ENCODE measurements at regions of chr4 and their contacts with region 1.

Region 1: DNA sequence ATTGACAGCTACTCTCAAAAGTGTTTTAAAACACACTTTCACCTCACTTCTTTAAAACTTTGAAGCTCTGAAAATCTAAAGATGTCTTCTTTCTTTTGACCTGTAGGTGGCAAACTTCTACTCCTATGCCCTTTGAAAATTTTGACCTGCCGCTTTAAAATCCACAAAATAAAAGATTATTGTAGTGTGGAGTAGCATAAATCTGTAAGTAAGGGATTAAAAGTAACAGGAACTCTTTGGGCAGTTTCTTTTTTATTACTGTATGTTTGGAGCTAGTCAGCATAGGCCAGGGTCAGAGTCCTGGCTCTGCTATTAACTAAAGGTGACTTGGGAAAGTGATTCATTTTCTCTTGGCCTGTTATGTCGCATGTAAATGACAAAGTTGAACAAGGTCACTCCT is 25.5 kb downstream of the BBS12 start:
- DNase-seq: no peak
- H3K4me3 ChIP-seq: no peak overlapping the region
- H3K27ac ChIP-seq: no peak overlapping the region
- H3K4me1 ChIP-seq: no peaks in the 10 kb centered on the region
- H3K27me3 ChIP-seq: no peaks in the 10 kb centered on the region
- CTCF ChIP-seq: peak; percentile 44 to 67

Region 2: GRCh38 chr4:122732329-122733026 is 25.6 kb before region 1 on chr4 and contains the start of gene BBS12:
- CTCF ChIA-PET with region 1: interaction called, 3 read pairs
- dilution Hi-C with region 1: no loop called
- in situ Hi-C with region 1: no loop called
- intact Hi-C with region 1: loop called (anchors 2 kb)
- DNase-seq: peak; percentile 99
- H3K4me3 ChIP-seq: peak within 1 kb of the TSS; percentile 58 to 76 (median 70)
- H3K27ac ChIP-seq: peak within 1 kb of the TSS; percentile 92
- H3K4me1 ChIP-seq: peaks cover 7% of the 10 kb centered on the region
- H3K27me3 ChIP-seq: no peaks in the 10 kb centered on the region
- CTCF ChIP-seq: peak in 1 of 2 donors; percentile 62
- total RNA-seq, gene BBS12: 4.3 to 13.0 TPM

Region 3: DNA sequence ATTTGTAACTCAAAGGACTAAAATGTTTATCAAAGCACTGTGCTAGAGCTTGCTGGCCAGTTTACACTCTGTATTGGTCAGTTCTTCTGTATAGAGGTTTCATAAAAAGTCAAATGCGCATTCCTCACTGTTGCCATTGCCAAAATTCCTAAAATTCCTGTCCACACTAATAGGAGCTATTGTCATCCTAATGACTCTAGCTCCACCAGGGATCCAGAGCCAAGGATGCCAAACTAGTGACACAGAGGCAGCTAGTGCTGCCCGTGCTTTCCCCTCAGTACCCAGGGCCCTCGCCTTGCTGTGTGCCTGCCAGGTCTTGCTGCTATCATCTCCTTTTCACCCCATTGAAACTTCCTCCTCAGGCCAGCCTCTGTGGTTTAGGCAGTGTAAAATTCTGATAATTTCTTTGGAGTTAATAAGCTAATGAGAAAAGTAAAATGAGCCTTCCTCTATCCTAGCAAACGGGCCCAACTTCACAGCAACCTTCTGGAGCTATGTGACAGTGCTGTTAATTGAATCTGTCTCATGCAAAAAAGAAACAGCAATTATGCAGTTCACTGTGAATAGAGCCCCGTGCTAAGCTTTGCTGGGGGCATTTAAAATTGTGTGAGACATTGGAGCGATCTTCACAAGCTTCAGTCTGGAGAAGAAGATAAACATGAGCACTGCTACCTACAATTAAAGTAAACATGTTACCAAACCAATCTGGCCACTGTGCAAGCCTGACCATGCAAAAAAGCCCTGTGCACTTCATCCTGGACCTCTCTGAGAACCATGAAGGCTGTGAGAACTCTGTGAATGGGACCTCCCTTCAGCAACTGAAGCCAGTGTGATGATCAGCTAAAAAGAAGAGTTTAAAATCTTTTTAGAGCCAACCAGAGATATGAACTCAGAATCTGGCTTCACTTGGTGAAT is 25.5 kb after region 1 on chr4:
- CTCF ChIA-PET with region 1: no interaction called
- dilution Hi-C with region 1: no loop called
- in situ Hi-C with region 1: no loop called
- intact Hi-C with region 1: loop called (anchors 1 kb)
- DNase-seq: peak; percentile 87
- H3K4me3 ChIP-seq: no peak overlapping the region
- H3K27ac ChIP-seq: peak overlapping the region; percentile 49
- H3K4me1 ChIP-seq: peaks cover 34% of the 10 kb centered on the region
- H3K27me3 ChIP-seq: no peaks in the 10 kb centered on the region
- CTCF ChIP-seq: no peak

Region 4: DNA sequence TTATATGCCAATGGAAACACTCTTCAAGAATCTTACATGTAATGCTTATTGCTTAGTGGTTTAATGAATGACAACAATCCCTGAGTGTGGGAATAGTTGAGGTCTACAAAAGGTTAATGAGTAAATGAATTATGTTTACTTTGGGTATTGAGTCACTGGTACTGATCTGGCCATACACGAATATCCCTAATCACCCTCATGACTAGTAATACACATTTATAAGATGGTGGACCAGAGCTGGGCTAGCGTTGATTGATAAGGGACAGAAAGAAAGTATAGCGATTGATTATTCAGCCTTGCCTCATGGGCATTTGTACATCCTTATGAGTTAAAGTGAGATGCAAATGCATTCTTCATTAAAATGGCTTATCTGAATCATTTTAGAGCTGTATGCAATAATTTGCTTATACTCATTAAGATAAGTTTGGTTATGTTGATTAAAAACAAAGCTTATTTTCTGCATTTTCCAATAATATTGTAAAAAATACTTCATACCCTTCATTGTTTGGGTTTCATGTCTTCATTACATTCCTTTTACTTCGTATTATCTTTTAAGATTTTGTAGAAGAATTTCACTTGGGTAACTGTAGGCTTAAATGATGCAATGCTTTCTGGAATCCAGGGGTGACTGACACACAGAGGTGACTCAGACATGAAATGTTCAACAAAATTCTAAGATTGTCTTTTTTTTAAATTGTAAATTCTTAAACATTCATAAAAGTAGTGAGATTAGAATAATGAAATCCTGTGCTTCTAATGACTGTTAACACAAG is 116.0 kb after region 1 on chr4:
- CTCF ChIA-PET with region 1: no interaction called
- dilution Hi-C with region 1: no loop called
- in situ Hi-C with region 1: no loop called
- intact Hi-C with region 1: no loop called
- DNase-seq: peak; percentile 74
- H3K4me3 ChIP-seq: peak overlapping the region in 1 of 3 experiments; percentile 39
- H3K27ac ChIP-seq: peak overlapping the region; percentile 73
- H3K4me1 ChIP-seq: peaks cover 12% of the 10 kb centered on the region
- H3K27me3 ChIP-seq: no peaks in the 10 kb centered on the region
- CTCF ChIP-seq: no peak

Region 5: GRCh38 chr4:122914292-122914904 is 156.4 kb after region 1 on chr4:
- CTCF ChIA-PET with region 1: interaction called, 5 read pairs
- dilution Hi-C with region 1: loop called (anchors 25 kb)
- in situ Hi-C with region 1: no loop called
- intact Hi-C with region 1: loop called (anchors 1 kb)
- DNase-seq: peak; percentile 39
- H3K4me3 ChIP-seq: no peak overlapping the region
- H3K27ac ChIP-seq: no peak overlapping the region
- H3K4me1 ChIP-seq: peaks cover 11% of the 10 kb centered on the region
- H3K27me3 ChIP-seq: no peaks in the 10 kb centered on the region
- CTCF ChIP-seq: peak; percentile 30 to 50

Region 6: DNA sequence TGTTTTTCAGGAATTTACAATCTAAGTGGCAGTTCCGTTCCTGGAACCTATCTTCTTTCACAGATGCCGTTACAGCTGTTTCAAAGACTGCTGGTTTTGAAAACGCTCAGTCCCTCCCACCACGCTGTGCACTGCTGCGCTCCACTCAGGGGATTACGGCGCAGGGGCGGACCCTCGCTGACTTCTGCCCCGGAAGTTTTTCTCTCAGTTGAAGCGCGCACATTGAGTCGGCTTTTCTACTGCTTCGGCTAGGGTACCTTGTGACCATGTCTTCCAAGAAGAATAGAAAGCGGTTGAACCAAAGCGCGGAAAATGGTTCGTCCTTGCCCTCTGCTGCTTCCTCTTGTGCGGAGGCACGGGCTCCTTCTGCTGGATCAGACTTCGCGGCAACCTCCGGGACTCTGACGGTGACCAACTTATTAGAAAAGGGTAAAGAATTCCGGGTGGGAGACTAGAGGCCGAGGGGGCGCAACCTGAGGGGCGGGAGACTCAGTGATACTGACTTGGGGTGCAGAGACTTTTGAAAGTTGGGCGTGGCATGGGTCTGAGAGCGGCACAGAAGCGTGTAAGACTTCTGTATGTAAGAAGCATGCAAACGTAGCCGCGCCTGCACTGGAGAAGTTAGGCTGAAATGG is 165.0 kb after region 1 on chr4:
- CTCF ChIA-PET with region 1: interaction called, 4 read pairs
- dilution Hi-C with region 1: loop called (anchors 25 kb)
- in situ Hi-C with region 1: loop called (anchors 10 kb)
- intact Hi-C with region 1: no loop called
- DNase-seq: peak; percentile 81
- H3K4me3 ChIP-seq: peak overlapping the region; percentile 72 to 99 (median 85)
- H3K27ac ChIP-seq: peak overlapping the region; percentile 61
- H3K4me1 ChIP-seq: peaks cover 8% of the 10 kb centered on the region
- H3K27me3 ChIP-seq: no peaks in the 10 kb centered on the region
- CTCF ChIP-seq: no peak